ENCODE measurements at regions of chr11 and their contacts with region 1.

Region 1: DNA sequence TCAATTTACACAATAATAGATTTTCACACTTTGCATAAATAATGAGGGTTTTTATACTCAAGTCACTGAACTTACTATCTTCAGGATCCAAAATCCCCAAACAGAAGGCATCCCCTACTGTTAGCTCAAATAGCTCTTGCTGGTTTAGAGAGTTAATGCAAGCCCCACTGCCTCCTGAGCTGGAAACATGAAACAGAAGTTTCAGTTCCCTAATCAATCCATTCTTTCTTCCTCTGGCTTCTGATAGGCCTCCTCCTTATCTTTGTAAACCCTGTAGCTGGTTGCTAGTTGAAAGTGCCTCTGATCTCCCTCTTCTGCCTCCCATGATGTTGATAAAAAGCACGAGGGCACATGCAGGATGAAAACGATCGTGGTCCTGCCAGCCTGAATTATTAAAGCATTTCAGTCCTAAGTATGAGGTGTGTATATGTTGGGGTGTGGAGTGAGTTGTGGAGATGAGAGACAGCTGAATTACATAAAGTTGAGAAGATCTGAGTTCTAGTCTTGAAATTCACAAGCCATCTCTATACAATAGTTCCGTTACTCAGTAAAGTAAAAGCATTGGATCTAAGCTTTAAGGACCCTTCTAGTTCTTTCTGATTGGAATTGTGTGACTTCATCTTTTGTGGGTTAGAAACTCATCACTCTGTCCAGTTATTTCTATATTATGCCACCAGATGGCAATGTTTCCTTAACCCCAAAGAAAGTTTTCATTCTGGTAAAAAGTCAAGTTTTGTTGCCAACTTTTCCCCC is 35.0 kb upstream of the EHF start:
- DNase-seq: no peak
- ATAC-seq: peak in 1 of 2 donors; percentile 49
- H3K4me3 ChIP-seq: peak overlapping the region in 1 of 4 donors; percentile 20
- H3K27ac ChIP-seq: no peak overlapping the region
- H3K4me1 ChIP-seq: no peaks in the 10 kb centered on the region
- H3K27me3 ChIP-seq: no peaks in the 10 kb centered on the region
- CTCF ChIP-seq: peak; percentile 56 to 75 (median 73)
- POLR2A ChIP-seq: no peak

Region 2: DNA sequence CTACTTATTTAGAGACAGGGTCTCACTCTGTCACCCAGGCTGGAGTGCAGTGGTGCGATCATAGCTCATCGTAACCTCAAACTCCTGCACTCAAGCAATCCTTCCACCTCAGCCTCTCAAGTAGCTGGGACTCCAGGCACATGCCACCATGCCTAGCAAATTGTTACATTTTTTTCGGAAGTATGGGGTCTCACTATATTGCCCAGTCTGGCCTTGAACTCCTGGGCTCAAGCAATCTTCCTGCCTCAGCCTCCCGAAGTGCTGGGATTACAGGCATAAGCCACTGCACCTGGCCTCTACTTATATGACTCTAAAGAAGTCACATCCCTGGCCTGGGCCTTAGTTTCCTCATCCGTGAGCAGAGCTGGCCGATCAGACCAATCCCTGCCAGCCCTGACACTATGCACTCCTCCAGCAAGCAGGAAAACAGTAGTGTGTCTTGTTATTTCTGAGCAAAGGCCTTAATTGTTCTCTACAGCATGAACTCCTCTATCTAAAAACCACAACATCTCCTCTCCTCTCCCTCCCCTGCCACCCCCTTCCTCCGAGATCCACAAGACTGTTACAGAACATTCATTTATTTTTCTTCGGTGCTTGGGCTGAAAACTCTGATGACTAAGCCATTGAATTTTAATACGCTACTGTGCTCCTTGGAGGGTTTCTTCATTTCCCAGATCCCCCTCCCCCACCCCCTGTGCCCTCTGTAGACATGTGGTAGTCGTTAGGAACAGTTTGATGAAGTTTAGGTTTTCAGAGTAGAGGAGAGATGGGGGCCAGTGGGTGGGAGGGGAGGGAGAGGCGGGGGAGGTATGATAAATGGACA is 319.6 kb before region 1 on chr11:
- in situ Hi-C with region 1: no loop called
- intact Hi-C with region 1: no loop called
- DNase-seq: no peak
- ATAC-seq: no peak
- H3K4me3 ChIP-seq: no peak overlapping the region
- H3K27ac ChIP-seq: no peak overlapping the region
- H3K4me1 ChIP-seq: peaks cover 38 to 39% of the 10 kb centered on the region in 2 donors
- H3K27me3 ChIP-seq: no peaks in the 10 kb centered on the region
- CTCF ChIP-seq: no peak
- POLR2A ChIP-seq: no peak

Region 3: DNA sequence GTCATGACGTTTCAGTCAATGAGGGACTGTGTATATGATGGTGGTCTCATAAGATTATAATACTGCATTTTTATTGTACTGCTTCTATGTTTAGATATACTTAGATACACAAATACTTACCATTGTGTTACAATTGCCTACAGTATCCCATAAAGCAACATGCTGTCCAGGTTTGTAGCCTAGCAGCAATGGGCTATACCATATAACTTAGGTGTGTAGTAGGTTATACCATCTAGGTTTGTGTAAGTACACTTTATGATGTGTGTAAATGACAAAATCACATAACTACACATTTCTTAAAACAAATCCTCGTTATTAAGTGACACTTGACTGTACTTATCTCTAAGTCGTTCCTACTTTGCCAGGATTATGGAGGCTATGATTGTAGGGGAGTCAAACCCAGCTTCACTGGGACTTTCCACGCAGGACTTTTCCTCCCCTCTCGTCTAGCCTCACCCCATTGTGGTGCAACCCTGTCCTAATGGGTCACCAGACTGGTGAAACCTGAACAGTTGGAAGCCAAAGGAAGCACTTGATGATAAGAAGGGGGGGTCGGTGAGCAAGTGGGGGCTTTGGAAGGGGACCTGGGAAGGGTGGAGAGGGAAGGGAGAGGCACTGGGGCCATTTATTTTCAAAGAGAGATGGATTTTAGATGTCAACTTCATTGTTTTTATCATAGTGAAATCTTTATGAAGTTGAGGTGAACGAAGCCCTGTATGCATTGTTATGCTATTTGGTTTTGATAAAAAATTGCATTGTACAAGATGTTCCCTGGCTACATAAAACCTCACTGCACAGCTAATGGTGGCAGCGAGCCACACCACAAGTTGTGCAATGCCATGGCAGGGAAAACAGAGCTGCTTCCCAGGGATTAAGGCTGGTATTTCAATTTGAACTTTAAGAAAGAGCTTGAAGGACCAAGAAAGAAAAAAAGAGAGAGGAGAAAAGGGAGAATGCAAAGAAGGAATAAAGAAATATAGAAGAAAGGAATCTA is 164.1 kb after region 1 on chr11:
- in situ Hi-C with region 1: no loop called
- intact Hi-C with region 1: loop called (anchors 10 kb)
- DNase-seq: peak; percentile 75 to 87
- ATAC-seq: peak; percentile 88 to 90
- H3K4me3 ChIP-seq: no peak overlapping the region
- H3K27ac ChIP-seq: peak overlapping the region; percentile 24 to 78 (median 65)
- H3K4me1 ChIP-seq: peaks cover 24 to 37% of the 10 kb centered on the region in 2 donors
- H3K27me3 ChIP-seq: no peaks in the 10 kb centered on the region
- CTCF ChIP-seq: no peak
- POLR2A ChIP-seq: no peak

Region 4: GRCh38 chr11:34899633-34900016 is 313.7 kb after region 1 on chr11:
- in situ Hi-C with region 1: loop called (anchors 5 kb)
- intact Hi-C with region 1: no loop called
- DNase-seq: no peak
- ATAC-seq: no peak
- H3K4me3 ChIP-seq: no peak overlapping the region
- H3K27ac ChIP-seq: no peak overlapping the region
- H3K4me1 ChIP-seq: peaks cover 11 to 19% of the 10 kb centered on the region in 2 donors
- H3K27me3 ChIP-seq: no peaks in the 10 kb centered on the region
- CTCF ChIP-seq: no peak
- POLR2A ChIP-seq: no peak

Region 5: GRCh38 chr11:35391922-35392813 is 806.3 kb after region 1 on chr11:
- in situ Hi-C with region 1: loop called in 2 of 4 experiments (anchors 10 to 25 kb)
- intact Hi-C with region 1: loop called (anchors 5 kb)
- DNase-seq: peak; percentile 26 to 52
- ATAC-seq: peak; percentile 61 to 65
- H3K4me3 ChIP-seq: peak overlapping the region in 1 of 4 donors; percentile 29
- H3K27ac ChIP-seq: no peak overlapping the region
- H3K4me1 ChIP-seq: peaks cover 3 to 4% of the 10 kb centered on the region in 2 donors
- H3K27me3 ChIP-seq: no peaks in the 10 kb centered on the region
- CTCF ChIP-seq: peak; percentile 80 to 88 (median 83)
- POLR2A ChIP-seq: no peak

Measured in gastrocnemius medialis (tissue), 4 donors.